Spleen (tissue), 13 donors: ENCODE measurements at regions of chr11 and their contacts with region 1.

Region 1: GRCh38 chr11:62787005-62787759 is at the start of gene TMEM179B:
- DNase-seq: peak; percentile 99
- H3K4me3 ChIP-seq: peak within 1 kb of the TSS; percentile 85 to 99 (median 98)
- H3K27ac ChIP-seq: peak within 1 kb of the TSS; percentile 95 to 100 (median 98)
- H3K4me1 ChIP-seq: peaks cover 34 to 60% (median 55%) of the 10 kb centered on the region in 6 donors
- H3K27me3 ChIP-seq: no peaks in the 10 kb centered on the region
- CTCF ChIP-seq: peak in 9 of 11 experiments; percentile 4 to 69 (median 48)
- POLR2A ChIP-seq: peak; percentile 38 to 96 (median 92)
- total RNA-seq, gene TMEM179B: 39.0 to 80.8 (median 48.3) TPM

Region 2: DNA sequence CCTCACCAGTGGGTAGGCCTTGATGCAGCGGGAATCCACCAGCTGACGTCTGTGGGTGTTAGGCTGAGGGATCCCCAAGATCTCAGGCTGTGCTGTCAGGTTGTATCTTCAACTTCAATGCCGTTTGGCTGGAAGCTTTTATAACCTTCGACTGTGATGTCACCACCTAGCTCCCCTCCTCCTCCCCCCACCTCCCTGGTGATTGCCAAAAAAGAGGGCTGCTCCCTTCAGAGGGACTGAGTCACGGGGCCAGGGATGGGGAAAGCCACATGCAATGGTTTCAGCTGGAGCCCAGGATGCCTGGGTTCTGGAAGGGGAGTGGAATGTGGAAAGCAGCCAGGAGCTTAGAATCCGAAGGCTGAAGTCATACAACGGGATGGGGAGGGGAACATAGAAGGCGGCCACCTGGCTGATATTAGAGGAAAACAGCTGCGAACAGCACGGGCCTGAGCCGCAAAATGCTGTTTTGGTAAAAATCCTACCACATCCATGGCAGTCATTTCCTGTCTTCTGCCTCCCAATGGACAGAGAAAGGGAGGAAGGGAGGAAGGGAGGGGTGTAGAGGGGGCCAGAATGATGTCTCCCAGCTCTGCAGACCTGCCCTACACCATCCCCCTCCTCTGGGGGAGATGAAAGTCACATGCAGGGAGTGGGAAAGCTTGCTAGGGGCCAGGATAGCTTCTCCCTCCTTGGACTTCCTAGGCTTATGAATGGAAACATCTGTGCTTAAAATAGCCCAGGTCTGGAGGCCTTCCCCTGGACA is 97.6 kb before region 1 on chr11 and contains the start of gene LRRN4CL:
- intact Hi-C with region 1: no loop called
- DNase-seq: no peak
- H3K4me3 ChIP-seq: no peak within 1 kb of the TSS
- H3K27ac ChIP-seq: no peak within 1 kb of the TSS
- H3K4me1 ChIP-seq: peaks cover 0 to 15% (median 6%) of the 10 kb centered on the region in 6 donors
- H3K27me3 ChIP-seq: peaks cover 6 to 23% (median 16%) of the 10 kb centered on the region in 7 donors
- CTCF ChIP-seq: no peak
- POLR2A ChIP-seq: no peak
- total RNA-seq, gene LRRN4CL: not detected

Region 3: DNA sequence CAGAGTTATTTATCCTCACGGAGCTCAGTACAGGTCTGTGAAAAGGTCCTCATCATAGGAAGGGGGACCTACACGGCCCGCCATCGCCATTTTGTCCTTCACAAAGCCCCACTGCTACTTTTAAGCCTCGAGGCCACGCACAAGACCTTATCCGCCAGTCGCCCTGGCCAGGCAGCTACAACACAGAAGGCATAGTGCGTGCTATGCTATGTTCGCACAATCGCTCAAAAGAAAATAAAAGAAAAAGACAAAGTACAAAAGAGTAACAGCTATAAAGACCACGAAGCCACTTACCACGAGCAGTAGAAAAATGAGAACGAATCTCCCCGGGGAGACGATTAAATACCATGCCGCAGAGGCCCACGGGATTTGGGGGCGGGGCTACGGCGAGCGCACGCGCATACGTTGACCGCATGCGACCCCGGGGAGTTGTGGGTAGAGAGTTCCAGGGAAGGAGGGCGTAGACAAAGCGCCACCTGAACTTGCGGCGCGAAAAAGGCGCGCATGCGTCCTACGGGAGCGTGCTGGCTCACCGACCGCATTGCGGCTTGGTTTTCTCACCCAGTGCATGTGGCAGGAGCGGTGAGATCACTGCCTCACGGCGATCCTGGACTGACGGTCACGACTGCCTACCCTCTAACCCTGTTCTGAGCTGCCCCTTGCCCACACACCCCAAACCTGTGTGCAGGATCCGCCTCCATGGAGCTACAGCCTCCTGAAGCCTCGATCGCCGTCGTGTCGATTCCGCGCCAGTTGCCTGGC is 68.6 kb after region 1 on chr11:
- intact Hi-C with region 1: loop called (anchors 5 kb)
- DNase-seq: peak; percentile 99
- H3K4me3 ChIP-seq: peak overlapping the region; percentile 61 to 95 (median 85)
- H3K27ac ChIP-seq: peak overlapping the region; percentile 45 to 90 (median 86)
- H3K4me1 ChIP-seq: peaks cover 22 to 72% (median 52%) of the 10 kb centered on the region in 6 donors
- H3K27me3 ChIP-seq: no peaks in the 10 kb centered on the region
- CTCF ChIP-seq: peak in 6 of 11 experiments; percentile 6 to 52 (median 36)
- POLR2A ChIP-seq: peak; percentile 85 to 92 (median 91)